WTC11 (cell line): ENCODE measurements at regions of chr3 and their contacts with region 1.

Region 1: GRCh38 chr3:183884427-183885296 is at the start of gene PARL:
- DNase-seq: peak; percentile 97
- ATAC-seq: peak; percentile 98
- H3K4me3 Mint-ChIP-seq: peak within 1 kb of the TSS; percentile 95
- H3K27ac Mint-ChIP-seq: peak within 1 kb of the TSS; percentile 63
- H3K4me1 Mint-ChIP-seq: peaks cover 19% of the 10 kb centered on the region
- H3K27me3 Mint-ChIP-seq: peaks cover 2% of the 10 kb centered on the region
- CTCF ChIP-seq: peak; percentile 90
- total RNA-seq, gene PARL: 71.3 to 93.5 TPM (median 74.3 TPM) in 3 replicates

Region 2: DNA sequence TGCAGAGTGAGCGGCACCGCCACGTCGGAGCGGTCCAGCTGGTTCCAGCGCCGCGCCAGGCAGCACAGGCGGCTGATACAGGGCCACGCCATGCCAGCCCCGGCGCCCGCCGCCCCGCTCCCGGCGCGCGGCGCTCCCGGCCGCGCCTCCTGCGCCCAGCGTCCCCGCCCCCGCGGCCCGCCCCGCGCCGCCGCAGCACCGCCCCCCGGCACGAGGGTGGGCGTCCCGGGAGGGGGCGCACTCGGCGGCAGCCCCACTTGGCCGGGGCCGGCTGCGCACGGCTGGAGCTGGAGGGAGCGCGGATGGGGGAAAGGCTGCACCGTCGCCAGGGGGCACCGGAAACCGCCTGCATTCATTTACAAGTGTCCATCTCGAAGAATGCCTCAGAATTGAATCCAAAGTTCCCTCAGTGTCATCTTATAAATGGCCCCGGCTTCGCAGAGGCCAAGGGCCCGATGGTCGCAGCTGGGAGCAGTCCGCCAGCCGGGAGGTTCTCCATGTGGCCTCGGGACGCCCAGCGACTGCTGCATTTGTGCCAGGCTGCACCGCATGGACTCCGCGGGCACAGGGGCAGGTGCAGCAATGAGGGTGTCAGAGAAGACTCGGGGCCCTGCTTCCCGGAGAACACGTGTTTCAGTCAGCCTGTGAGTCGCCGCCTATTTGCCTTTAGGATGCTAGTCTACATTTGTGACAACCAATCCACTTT is 59.1 kb before region 1 on chr3 and contains the start of gene MAP6D1:
- CTCF ChIA-PET with region 1: interaction called, 23 read pairs
- POLR2A ChIA-PET with region 1: no interaction called
- DNase-seq: peak; percentile 80
- ATAC-seq: peak; percentile 81
- H3K4me3 Mint-ChIP-seq: peak within 1 kb of the TSS; percentile 73
- H3K27ac Mint-ChIP-seq: peak within 1 kb of the TSS; percentile 77
- H3K4me1 Mint-ChIP-seq: peaks cover 27% of the 10 kb centered on the region
- H3K27me3 Mint-ChIP-seq: peaks cover 12% of the 10 kb centered on the region
- CTCF ChIP-seq: peak; percentile 33; the same call in 1 of the 2 replicates
- total RNA-seq, gene MAP6D1: 4.3 to 6.3 TPM (median 5.0 TPM) in 3 replicates

Region 3: DNA sequence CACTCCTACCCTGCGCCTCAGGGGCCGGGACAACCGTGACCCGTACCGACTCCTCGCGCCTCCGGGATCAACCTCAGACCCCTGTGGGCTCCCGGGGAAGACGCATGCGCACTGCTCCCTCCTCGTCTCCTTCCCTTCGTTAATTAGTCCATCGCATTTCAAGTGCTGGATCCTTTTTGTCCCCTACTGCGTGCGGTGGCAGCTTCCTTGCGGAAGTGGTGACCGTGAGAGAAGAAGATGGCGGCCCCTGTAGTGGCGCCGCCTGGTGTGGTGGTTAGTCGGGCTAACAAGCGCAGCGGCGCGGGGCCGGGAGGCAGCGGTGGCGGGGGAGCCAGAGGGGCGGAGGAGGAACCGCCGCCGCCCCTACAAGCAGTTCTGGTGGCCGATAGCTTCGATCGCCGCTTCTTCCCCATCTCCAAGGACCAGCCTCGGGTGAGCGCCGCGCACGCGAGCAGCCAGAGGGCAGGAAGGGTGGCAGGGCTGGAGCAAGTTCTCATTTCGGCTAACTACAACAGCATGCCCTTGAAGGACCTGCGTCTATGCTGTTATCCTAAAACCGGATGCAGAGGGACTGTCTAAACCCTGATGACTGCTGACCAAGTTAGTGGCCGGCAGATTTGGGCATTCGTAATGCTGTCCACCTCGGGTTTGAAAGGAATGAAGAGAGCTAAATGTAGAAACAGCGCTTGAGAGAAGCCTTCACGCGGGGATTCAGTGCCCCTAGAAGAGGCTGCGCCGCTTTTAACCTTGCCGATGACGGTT is 250.7 kb after region 1 on chr3 and contains the start of gene EIF2B5:
- CTCF ChIA-PET with region 1: interaction called, 11 read pairs
- POLR2A ChIA-PET with region 1: no interaction called
- DNase-seq: peak; percentile 89
- ATAC-seq: peak; percentile 81
- H3K4me3 Mint-ChIP-seq: peak within 1 kb of the TSS; percentile 94
- H3K27ac Mint-ChIP-seq: peak within 1 kb of the TSS; percentile 89
- H3K4me1 Mint-ChIP-seq: peaks cover 20% of the 10 kb centered on the region
- H3K27me3 Mint-ChIP-seq: no peaks in the 10 kb centered on the region
- CTCF ChIP-seq: no peak
- total RNA-seq, gene EIF2B5: 36.6 to 42.3 TPM (median 38.0 TPM) in 3 replicates

Region 4: DNA sequence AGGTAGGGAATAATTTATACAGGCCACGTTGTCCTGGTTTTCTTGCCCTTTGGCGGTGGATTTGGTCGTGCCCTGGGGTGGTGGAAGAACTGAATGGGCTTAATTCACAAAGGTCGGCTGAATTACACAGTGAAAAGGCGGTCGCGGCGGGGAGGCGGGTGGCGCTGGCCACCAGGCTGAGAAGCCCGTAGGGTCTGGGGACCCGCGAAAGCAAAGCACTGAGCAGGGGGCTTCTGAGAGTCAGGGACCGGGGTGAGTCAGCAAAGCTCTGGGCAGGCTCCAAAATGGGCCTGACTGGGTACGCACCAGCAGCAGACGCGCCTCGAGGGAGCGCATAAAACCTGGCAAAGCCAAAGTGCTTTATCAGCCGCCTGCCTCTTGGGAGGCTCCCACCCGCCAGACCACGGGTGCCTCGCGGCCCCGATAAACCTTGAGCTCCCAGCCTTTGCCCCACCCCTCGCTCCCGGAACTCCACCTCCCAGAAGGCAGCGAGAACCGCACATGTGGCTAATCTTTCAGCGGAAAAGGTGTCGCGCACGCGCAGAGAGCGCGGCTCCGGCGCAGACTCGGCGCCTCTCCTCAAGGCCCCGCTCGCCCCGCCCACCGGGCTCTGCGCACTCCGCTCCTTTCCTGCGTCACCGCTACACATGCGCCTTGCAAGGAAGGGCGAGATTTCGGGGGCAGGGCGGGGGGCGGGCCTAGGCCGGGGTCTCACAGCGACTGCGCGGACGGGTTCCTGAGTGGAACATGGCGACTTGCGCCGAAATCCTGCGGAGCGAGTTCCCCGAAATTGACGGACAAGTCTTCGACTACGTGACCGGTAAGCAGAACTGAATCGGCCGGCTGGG is 301.0 kb after region 1 on chr3 and contains the start of gene ABCF3:
- CTCF ChIA-PET with region 1: no interaction called
- POLR2A ChIA-PET with region 1: no interaction called
- DNase-seq: peak; percentile 99
- ATAC-seq: peak; percentile 89
- H3K4me3 Mint-ChIP-seq: peak within 1 kb of the TSS; percentile 98
- H3K27ac Mint-ChIP-seq: peak within 1 kb of the TSS; percentile 97
- H3K4me1 Mint-ChIP-seq: peaks cover 23% of the 10 kb centered on the region
- H3K27me3 Mint-ChIP-seq: no peaks in the 10 kb centered on the region
- CTCF ChIP-seq: no peak
- total RNA-seq, gene ABCF3: 49.7 to 63.6 TPM (median 50.0 TPM) in 3 replicates